ENCODE measurements at regions of chr6 and their contacts with region 1.

Region 1: GRCh38 chr6:24387818-24388217 is 14.9 kb upstream of the MRS2 start:
- DNase-seq: no peak
- H3K4me3 ChIP-seq: no peak overlapping the region
- H3K27ac ChIP-seq: no peak overlapping the region
- H3K4me1 ChIP-seq: no peaks in the 10 kb centered on the region
- H3K27me3 ChIP-seq: peaks cover 0 to 2% (median 0%) of the 10 kb centered on the region in 5 experiments

Region 2: GRCh38 chr6:24043848-24044247 is 344.0 kb before region 1 on chr6:
- CTCF ChIA-PET with region 1: no interaction called
- POLR2A ChIA-PET with region 1: no interaction called
- DNase-seq: no peak
- H3K4me3 ChIP-seq: no peak overlapping the region
- H3K27ac ChIP-seq: no peak overlapping the region
- H3K4me1 ChIP-seq: no peaks in the 10 kb centered on the region
- H3K27me3 ChIP-seq: no peaks in the 10 kb centered on the region

Region 3: DNA sequence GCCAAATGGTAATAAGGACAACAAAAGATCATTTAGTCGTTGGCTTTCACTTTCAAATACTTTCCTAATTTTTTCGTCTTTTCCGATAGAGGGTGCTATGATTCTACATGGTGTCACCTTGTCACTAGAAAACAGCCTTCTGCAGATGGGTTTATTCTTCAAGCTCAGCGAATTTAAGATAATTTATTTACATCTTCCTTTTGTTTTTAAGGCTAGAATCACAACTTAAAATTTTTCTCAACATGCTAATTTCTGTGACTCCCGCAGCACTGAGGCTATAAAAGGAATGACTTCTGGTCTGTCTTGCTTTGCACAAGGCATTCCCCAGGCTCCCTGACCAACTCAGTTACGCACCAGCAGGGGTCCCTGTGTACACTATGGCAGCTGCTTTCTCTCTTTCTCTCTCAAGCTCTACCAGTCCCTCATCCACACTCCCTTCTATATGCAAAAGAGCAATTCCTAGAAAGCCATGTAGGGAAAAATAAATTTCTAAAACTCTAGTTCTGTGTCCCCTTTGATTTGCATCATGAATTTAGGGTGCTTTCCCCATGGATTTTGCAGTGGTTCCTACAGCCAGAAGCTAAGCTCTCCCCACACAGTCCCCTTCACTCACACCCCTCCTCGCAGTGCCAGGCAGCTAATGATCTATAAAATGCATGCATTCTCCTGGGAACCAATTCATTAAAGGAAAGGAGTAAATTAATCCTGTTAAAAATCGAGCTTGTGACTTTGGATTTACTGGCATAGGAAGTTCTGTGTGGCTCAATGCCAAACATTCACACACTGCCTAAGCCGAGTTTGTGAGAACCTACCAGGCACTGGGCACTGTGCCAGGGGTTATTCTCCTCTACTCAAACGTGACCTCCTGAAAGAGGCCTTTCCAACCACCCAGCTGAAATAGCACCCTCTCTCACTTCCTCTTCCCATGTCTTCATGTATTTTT is 104.5 kb before region 1 on chr6:
- CTCF ChIA-PET with region 1: interaction called, 25 read pairs
- POLR2A ChIA-PET with region 1: interaction called, 3 read pairs
- DNase-seq: peak; percentile 81 to 83 (median 83)
- H3K4me3 ChIP-seq: peak overlapping the region in 5 of 7 experiments; percentile 13 to 57 (median 41)
- H3K27ac ChIP-seq: no peak overlapping the region
- H3K4me1 ChIP-seq: peaks cover 6 to 15% (median 11%) of the 10 kb centered on the region in 4 experiments
- H3K27me3 ChIP-seq: no peaks in the 10 kb centered on the region

Region 4: GRCh38 chr6:24408719-24409410 is 21.0 kb after region 1 on chr6:
- CTCF ChIA-PET with region 1: no interaction called
- POLR2A ChIA-PET with region 1: no interaction called
- DNase-seq: no peak
- H3K4me3 ChIP-seq: no peak overlapping the region
- H3K27ac ChIP-seq: peak overlapping the region in 1 of 2 experiments; percentile 25
- H3K4me1 ChIP-seq: peaks cover 3 to 7% (median 5%) of the 10 kb centered on the region in 4 experiments
- H3K27me3 ChIP-seq: no peaks in the 10 kb centered on the region

Measured in common myeloid progenitor, CD34-positive (primary cell).